ENCODE measurements at regions of chr12 and their contacts with region 1.

Region 1: GRCh38 chr12:10540776-10541205 is 35.1 kb downstream of the EIF2S3B start:
- DNase-seq: peak; percentile 79
- ATAC-seq: peak; percentile 96
- H3K4me3 ChIP-seq: no peak overlapping the region
- H3K27ac ChIP-seq: peak overlapping the region; percentile 72
- H3K4me1 ChIP-seq: peaks cover 8% of the 10 kb centered on the region
- H3K27me3 ChIP-seq: no peaks in the 10 kb centered on the region
- CTCF ChIP-seq: no peak
- EP300 ChIP-seq: no peak; a peak in 1 of 4 replicates
- POLR2A ChIP-seq: no peak
- RAD21 ChIP-seq: peak; percentile 27; the same call in 1 of the 2 replicates

Region 2: GRCh38 chr12:10641735-10642500 is 101.1 kb after region 1 on chr12:
- CTCF ChIA-PET with region 1: no interaction called
- POLR2A ChIA-PET with region 1: no interaction called
- RAD21 ChIA-PET with region 1: no interaction called
- SMC1A ChIA-PET with region 1: no interaction called
- in situ Hi-C with region 1: loop called (anchors 25 kb)
- intact Hi-C with region 1: no loop called
- DNase-seq: no peak
- ATAC-seq: no peak
- H3K4me3 ChIP-seq: no peak overlapping the region
- H3K27ac ChIP-seq: no peak overlapping the region
- H3K4me1 ChIP-seq: no peaks in the 10 kb centered on the region
- H3K27me3 ChIP-seq: no peaks in the 10 kb centered on the region; a peak in 1 of 4 replicates
- CTCF ChIP-seq: no peak
- EP300 ChIP-seq: no peak
- POLR2A ChIP-seq: no peak
- RAD21 ChIP-seq: no peak